ENCODE measurements at regions of chr17 and their contacts with region 1.

Region 1: DNA sequence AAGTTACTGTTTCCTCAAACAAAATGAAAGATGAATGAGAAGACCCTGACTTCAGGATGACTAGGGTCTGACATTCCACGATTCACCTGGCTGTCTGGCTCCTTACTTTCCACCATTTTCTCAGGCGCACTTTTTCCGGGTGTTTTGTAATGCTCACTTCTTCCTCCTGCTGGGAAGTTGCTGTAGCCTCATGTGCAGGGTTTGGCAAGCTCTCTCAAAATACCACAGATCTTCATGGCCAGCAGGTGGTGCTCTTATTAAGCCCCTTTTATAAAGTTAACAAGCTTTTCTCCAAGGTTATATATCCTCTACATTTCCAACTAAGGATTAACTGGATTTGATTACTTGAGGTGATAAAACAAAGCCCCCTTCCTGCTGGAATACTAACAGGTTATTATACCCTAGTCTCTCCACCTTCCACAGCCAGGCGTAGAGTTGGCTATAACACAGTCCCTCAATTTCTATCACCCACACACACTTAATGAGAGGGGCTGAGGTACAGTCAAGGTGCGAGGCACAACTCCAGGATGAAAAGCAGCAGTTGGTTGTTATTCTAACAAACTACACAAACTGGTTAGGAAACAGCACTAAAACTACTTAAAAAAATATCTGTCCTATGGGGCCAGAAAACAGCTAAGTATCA is 45.4 kb downstream of the STH start:
- DNase-seq: peak; percentile 54
- H3K4me3 ChIP-seq: no peak overlapping the region
- H3K27me3 ChIP-seq: no peaks in the 10 kb centered on the region
- CTCF ChIP-seq: peak; percentile 87

Region 2: GRCh38 chr17:45942284-45942683 is 102.1 kb before region 1 on chr17:
- CTCF ChIA-PET with region 1: no interaction called
- POLR2A ChIA-PET with region 1: no interaction called
- DNase-seq: no peak
- H3K4me3 ChIP-seq: no peak overlapping the region
- H3K27me3 ChIP-seq: peaks cover 9% of the 10 kb centered on the region
- CTCF ChIP-seq: no peak

Region 3: DNA sequence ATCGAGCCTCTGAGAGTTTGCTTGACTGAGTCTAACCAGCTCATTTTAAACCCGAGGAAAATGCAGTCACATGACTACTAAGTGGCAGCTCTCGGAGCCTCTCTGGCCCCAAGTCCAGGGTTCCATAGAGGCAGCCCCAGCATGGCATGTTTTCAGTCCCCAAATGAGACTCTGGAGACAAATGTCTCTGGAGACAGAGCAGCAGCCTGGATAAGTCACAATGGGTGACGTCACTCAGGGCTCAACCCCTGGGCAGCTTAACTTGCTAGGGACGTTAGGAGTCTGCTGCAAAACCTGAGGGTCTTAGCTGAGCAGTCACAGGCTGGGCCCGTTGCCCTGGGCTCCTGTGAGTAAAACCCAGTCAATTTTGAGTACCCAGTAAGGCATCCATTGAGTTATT is 52.2 kb before region 1 on chr17:
- CTCF ChIA-PET with region 1: no interaction called
- POLR2A ChIA-PET with region 1: no interaction called
- DNase-seq: no peak
- H3K4me3 ChIP-seq: no peak overlapping the region
- H3K27me3 ChIP-seq: no peaks in the 10 kb centered on the region
- CTCF ChIP-seq: no peak

Region 4: GRCh38 chr17:46002311-46002972 is 42.0 kb before region 1 on chr17:
- CTCF ChIA-PET with region 1: interaction called, 31 read pairs
- POLR2A ChIA-PET with region 1: no interaction called
- DNase-seq: no peak
- H3K4me3 ChIP-seq: no peak overlapping the region
- H3K27me3 ChIP-seq: no peaks in the 10 kb centered on the region
- CTCF ChIP-seq: peak; percentile 84

Region 5: DNA sequence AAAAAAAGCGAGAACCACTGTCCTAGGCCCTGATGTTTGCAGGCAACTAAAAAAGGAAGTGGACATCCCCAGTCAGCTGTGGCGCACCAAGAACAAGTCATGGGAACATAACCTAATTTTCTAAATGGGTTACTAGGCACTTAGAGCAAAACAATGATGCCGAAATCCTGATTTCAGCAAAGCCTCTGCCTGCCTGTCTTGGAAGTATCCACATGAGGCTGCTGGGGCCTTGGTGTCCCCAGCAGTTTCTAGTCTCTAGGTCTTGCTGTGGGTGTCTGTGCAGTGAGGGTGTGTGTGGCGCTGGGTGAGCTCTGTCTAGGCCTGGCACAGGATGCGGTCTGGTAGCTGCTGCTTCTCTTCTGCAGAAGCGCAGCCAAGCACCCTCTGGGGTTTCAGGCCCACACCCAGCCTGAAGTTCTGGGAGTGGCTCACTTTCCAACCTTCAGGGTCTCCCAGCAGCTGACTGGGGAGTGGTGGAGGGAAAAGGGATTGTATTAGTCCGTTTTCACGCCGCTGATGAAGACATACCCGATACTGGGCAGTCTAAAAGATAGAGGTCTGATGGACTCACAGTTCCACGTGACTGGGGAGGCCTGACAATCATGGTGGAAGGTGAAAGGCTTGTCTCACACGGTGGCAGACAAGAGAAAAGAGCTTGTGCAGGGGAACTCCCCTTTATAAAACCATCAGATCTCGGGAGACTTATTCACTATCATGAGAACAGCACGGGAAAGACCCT is 24.2 kb before region 1 on chr17:
- CTCF ChIA-PET with region 1: interaction called, 10 read pairs
- POLR2A ChIA-PET with region 1: no interaction called
- DNase-seq: no peak
- H3K4me3 ChIP-seq: no peak overlapping the region
- H3K27me3 ChIP-seq: no peaks in the 10 kb centered on the region
- CTCF ChIP-seq: no peak

Region 6: DNA sequence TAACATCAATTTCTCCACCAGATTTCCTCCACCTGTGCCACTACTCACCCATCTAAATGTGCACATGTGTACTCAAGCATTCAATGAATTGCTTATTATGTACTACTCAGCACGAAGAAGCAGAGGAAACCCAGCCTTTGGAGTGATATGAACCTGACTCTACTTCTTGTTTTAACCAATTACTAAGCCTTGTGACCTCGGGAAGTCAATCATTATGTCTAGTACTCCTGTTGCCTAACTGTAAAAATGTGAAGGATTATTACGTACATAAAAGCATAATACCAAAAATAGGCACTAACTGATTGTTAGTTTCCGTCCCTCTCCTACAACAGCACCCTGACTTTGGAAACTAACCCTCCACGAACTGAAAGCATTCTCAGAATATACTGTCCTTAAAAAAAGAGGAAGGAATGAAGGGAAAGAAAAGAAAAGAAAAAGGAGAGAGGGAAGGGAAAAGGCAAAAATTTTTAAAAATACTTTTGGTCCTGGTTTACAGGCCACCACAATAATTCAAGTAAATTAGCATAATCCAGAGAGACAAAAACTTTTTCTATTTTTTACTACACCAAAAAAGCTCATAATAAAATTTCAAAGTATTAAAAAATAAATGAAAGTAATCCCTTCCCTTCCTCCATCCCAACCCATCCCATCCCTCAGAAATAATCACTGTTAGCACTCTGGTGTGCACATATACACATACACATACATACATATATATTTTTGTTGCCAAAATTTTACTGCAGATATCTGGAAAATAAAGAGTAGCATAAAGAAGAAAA is 95.2 kb after region 1 on chr17:
- CTCF ChIA-PET with region 1: no interaction called
- POLR2A ChIA-PET with region 1: no interaction called
- DNase-seq: no peak
- H3K4me3 ChIP-seq: no peak overlapping the region
- H3K27me3 ChIP-seq: no peaks in the 10 kb centered on the region
- CTCF ChIP-seq: no peak

Region 7: DNA sequence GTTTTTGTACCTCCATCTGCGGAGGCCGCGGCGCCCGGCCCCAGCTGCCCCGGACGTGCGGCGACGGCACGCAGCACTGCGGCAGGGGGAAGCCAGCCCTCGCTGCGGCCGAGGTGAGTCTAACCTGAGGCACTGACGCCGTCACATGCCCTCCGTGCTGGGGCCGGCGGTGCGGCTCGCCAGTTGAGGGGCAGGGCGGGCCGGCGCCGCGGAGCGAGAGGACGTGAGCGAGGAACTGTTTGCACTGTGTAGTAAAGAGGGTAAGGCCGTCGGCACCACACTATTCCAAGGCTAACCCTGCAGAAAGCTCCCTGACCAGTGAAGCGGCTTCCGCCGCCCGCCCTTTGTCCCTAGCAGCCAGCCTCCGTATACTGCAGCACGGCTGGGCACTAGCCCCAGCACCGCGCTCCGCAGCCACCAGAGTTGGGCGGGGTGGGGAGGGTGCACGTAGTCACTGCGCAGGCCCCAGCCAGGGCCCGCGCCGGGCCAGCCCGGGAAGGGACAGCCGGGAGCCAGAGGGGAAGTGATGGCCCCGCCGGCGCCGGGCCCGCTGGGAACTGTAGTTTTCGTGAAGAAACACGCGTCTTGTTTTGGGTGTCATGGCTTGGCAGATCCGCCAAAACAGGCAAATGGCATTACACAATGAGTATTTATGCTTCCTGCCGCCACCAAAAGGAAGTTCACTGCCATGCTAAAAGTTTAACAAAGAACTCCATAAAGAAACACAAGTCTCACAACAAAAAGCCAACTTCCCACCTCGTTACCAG is 149.4 kb after region 1 on chr17:
- CTCF ChIA-PET with region 1: interaction called, 30 read pairs
- POLR2A ChIA-PET with region 1: no interaction called
- DNase-seq: peak; percentile 89
- H3K4me3 ChIP-seq: peak overlapping the region; percentile 86
- H3K27me3 ChIP-seq: no peaks in the 10 kb centered on the region
- CTCF ChIP-seq: 0 out of 2 replicates have a peak, but pooled peaks have one; percentile 16

Region 8: DNA sequence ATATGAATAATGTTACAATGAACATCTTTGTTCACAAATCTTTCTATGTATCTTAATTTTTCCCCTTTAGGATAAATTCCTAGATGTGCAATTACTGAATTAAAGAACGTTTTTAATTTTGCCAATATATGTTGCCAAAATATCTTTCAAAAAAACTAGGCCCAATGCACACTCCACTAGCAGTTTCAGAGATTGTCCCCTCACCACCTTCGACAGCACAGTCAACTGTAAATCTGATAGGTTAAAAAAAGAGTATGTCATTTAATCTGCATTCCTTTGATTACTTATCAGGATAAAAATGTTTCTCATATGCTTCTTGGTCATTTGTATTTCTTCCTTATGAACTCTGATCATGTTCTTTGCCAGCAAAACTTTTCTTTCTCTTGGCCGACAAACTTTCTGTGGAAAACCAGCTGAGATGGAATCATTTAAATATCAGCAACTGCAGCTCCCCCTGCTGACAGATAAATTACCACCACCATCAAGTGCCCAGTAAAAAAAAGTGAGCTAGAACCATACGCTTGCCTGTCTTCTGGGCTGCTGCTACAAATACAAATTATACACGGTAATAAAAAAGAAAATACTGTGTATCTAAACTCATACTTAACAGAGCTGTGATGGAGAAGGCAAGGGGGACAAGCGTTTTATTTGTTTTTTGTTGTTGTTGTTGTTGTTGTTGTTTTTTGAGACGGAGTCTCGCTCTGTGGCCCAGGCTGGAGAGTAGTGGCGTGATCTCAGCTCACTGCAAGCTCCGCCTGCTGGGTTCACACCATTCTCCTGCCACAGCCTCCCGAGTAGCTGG is 168.4 kb after region 1 on chr17:
- CTCF ChIA-PET with region 1: interaction called, 50 read pairs
- POLR2A ChIA-PET with region 1: no interaction called
- DNase-seq: no peak
- H3K4me3 ChIP-seq: no peak overlapping the region
- H3K27me3 ChIP-seq: no peaks in the 10 kb centered on the region
- CTCF ChIP-seq: peak; percentile 91